Pancreas (tissue), 10 donors: ENCODE measurements at regions of chr21 and their contacts with region 1.

Region 1: GRCh38 chr21:38631206-38631605 is 132.9 kb upstream of the ERG start:
- DNase-seq: no peak
- ATAC-seq: peak in 1 of 4 donors; percentile 58
- H3K4me3 ChIP-seq: no peak overlapping the region
- H3K27ac ChIP-seq: no peak overlapping the region
- H3K4me1 ChIP-seq: no peaks in the 10 kb centered on the region
- H3K27me3 ChIP-seq: no peaks in the 10 kb centered on the region
- CTCF ChIP-seq: no peak

Region 2: GRCh38 chr21:38699048-38699447 is 67.8 kb after region 1 on chr21:
- intact Hi-C with region 1: loop called in 1 of 3 experiments (anchors 10 kb)
- DNase-seq: no peak
- ATAC-seq: no peak
- H3K4me3 ChIP-seq: no peak overlapping the region
- H3K27ac ChIP-seq: no peak overlapping the region
- H3K4me1 ChIP-seq: no peaks in the 10 kb centered on the region
- H3K27me3 ChIP-seq: peaks cover 0 to 7% (median 0%) of the 10 kb centered on the region in 4 donors
- CTCF ChIP-seq: no peak